ENCODE measurements at regions of chr13 and their contacts with region 1.

Region 1: DNA sequence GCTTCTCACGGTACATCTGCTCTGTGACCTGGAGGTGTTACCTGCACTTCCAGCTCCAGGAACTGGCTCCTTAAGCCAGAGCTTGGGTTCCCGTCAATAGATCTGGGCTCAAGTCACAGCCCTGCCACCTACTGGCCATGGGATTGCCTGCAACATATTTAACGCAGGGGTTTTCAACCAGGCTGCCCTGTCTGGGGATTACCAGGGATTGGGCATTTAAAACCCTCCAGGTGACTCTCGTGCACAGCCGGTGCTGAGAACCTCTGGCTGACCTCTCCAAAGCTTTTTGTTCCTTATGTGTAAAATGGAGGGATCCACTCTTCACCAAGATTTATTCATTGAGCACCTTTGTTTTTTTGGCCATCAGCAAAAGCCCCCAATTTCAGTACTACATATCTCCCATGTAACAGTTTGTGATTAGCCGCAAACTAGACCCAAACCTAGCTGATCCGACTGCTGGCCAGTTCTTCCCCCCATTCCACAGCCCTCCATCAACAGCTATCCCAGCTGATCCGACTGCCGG is 76.6 kb upstream of the STK24 start:
- DNase-seq: peak; percentile 84
- H3K4me3 ChIP-seq: peak overlapping the region in 1 of 2 experiments; percentile 35; a peak in 1 of 4 replicates
- H3K27ac ChIP-seq: no peak overlapping the region
- H3K4me1 ChIP-seq: peaks cover 0 to 7% of the 10 kb centered on the region in 2 experiments; a peak in 2 of 4 replicates
- H3K27me3 ChIP-seq: no peaks in the 10 kb centered on the region
- CTCF ChIP-seq: peak; percentile 92
- EP300 ChIP-seq: 0 out of 4 replicates have a peak, but pooled peaks of 1 of the 2 experiments have one; percentile 31
- RAD21 ChIP-seq: peak; percentile 92

Region 2: GRCh38 chr13:98454389-98454881 is 199.1 kb before region 1 on chr13:
- CTCF ChIA-PET with region 1: interaction called, 164 read pairs
- POLR2A ChIA-PET with region 1: no interaction called
- DNase-seq: no peak
- H3K4me3 ChIP-seq: no peak overlapping the region
- H3K27ac ChIP-seq: peak overlapping the region; percentile 39 to 68
- H3K4me1 ChIP-seq: peaks cover 8 to 17% of the 10 kb centered on the region in 2 experiments; a peak in 2 of 4 replicates
- H3K27me3 ChIP-seq: no peaks in the 10 kb centered on the region
- CTCF ChIP-seq: no peak
- EP300 ChIP-seq: no peak
- RAD21 ChIP-seq: no peak

Region 3: DNA sequence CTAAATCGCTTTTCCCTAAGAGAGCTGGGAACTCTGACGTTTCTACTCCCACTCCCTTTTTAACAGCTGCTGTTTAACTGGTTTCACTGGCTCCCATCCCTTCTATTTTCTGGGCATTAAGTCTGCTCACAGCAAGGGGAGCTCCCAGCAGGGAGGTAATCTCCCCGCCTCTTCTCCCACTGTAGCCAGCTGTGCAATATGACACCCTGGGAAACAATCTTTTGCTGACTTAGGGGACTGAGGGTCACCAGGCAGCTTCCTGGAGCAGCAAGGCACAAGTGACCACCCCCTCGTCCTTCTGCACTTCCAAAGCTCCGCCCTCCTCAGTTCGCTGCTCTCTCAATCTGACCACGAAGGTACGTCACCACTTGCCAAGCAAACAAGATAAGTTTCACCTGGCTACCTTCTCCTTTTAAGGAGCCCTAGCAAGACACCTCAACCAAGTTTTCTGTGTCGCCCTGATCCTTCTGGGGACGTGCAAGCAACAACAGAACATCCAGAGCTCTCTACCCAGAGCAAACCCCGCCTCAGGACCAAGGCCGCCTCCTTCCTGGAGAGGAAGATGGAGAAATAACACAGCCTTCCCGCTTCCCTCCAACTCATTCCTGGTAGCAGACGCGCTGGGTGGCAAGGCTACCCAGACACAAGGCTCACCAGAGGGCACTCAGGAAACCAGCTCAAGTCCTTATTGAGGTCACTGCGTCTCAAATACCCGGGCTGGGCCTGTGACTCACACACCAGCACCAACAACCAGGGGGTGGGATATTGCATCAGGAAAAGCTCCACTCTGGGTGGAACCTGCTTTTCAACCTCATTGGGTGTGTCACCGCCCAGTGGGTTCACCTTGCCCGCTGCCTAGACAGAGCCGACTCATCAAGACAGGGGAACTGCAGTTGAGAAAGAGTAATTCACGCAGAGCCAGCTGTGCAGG is 169.0 kb before region 1 on chr13:
- CTCF ChIA-PET with region 1: interaction called, 15 read pairs
- POLR2A ChIA-PET with region 1: no interaction called
- DNase-seq: no peak
- H3K4me3 ChIP-seq: peak overlapping the region in 1 of 2 experiments; percentile 8; a peak in 1 of 4 replicates
- H3K27ac ChIP-seq: peak overlapping the region; percentile 5 to 87; a peak in 3 of 4 replicates
- H3K4me1 ChIP-seq: peaks cover 34 to 64% of the 10 kb centered on the region in 2 experiments
- H3K27me3 ChIP-seq: no peaks in the 10 kb centered on the region
- CTCF ChIP-seq: 0 out of 2 replicates have a peak, but pooled peaks have one; percentile 14
- EP300 ChIP-seq: no peak
- RAD21 ChIP-seq: no peak

Region 4: GRCh38 chr13:98664039-98664438 is 10.5 kb after region 1 on chr13:
- CTCF ChIA-PET with region 1: interaction called, 10 read pairs
- POLR2A ChIA-PET with region 1: no interaction called
- DNase-seq: no peak
- H3K4me3 ChIP-seq: no peak overlapping the region
- H3K27ac ChIP-seq: no peak overlapping the region
- H3K4me1 ChIP-seq: peaks cover 0 to 9% of the 10 kb centered on the region in 2 experiments; a peak in 1 of 4 replicates
- H3K27me3 ChIP-seq: no peaks in the 10 kb centered on the region; the same call in none of the 2 replicates
- CTCF ChIP-seq: no peak
- EP300 ChIP-seq: no peak
- RAD21 ChIP-seq: no peak

Measured in SK-N-SH (cell line).